ENCODE measurements at regions of chr5 and their contacts with region 1.

Region 1: GRCh38 chr5:16934123-16934522 is 2.0 kb downstream of the MYO10 start:
- DNase-seq: peak; percentile 69 to 92
- H3K4me3 ChIP-seq: peak overlapping the region; percentile 93
- H3K27ac ChIP-seq: 0 out of 2 replicates have a peak overlapping the region, but pooled peaks have one; percentile 7
- H3K4me1 ChIP-seq: peaks cover 37% of the 10 kb centered on the region
- H3K27me3 ChIP-seq: no peaks in the 10 kb centered on the region
- CTCF ChIP-seq: peak; percentile 99

Region 2: DNA sequence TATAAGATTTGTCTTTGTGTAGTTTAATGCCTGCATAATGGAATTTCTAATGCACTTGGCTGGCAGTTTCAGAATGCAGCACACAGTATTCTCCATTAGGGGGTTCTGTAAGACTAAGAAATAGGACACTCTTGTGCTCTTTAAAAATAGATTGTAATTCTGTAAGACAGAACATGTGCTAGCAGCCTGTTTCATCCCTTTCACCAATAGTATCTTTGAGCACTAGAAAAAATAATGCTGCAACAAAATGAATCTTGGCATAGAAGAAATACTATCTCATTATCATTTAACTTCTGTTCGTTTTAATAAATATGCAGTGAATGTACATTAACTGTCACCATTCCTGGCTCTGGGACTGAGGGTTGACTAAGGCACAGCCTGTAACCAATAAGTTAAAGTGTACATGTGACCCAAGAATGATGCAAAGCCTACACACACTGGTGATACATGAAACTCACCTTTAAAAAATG is 444.8 kb before region 1 on chr5:
- CTCF ChIA-PET with region 1: no interaction called
- POLR2A ChIA-PET with region 1: no interaction called
- intact Hi-C with region 1: loop called (anchors 2 kb)
- DNase-seq: peak; percentile 41 to 64
- H3K4me3 ChIP-seq: no peak overlapping the region
- H3K27ac ChIP-seq: no peak overlapping the region
- H3K4me1 ChIP-seq: peaks cover 26% of the 10 kb centered on the region
- H3K27me3 ChIP-seq: no peaks in the 10 kb centered on the region
- CTCF ChIP-seq: peak; percentile 88

Region 3: DNA sequence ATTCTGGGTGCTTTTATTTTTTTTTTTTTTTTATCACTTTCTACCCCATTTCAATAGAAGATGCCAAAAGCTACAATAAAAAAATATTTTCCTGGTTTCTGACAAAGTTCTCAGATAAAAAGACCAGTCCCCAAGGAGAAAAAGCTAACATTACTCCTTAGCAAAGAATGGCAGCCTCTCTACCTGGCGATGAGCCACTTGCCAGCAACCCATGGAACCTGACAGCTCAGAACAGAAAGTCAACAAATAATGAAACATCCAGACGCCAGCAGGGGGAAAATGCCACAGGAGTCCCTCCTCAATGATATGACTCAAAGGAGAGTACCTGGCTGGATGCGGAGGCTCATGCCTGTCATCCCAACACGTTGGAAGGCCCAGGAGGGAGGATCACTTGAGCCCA is 121.2 kb before region 1 on chr5:
- CTCF ChIA-PET with region 1: interaction called, 7 read pairs
- POLR2A ChIA-PET with region 1: interaction called, 5 read pairs
- intact Hi-C with region 1: loop called (anchors 1 kb)
- DNase-seq: peak; percentile 79 to 82
- H3K4me3 ChIP-seq: no peak overlapping the region
- H3K27ac ChIP-seq: no peak overlapping the region
- H3K4me1 ChIP-seq: peaks cover 43% of the 10 kb centered on the region
- H3K27me3 ChIP-seq: no peaks in the 10 kb centered on the region
- CTCF ChIP-seq: no peak; the same call in 1 of the 2 replicates

Region 4: GRCh38 chr5:16889203-16889971 is 44.7 kb before region 1 on chr5:
- CTCF ChIA-PET with region 1: interaction called, 5 read pairs
- POLR2A ChIA-PET with region 1: interaction called, 9 read pairs
- intact Hi-C with region 1: loop called (anchors 1 kb)
- DNase-seq: peak; percentile 54 to 90
- H3K4me3 ChIP-seq: peak overlapping the region; percentile 35; the same call in 1 of the 2 replicates
- H3K27ac ChIP-seq: peak overlapping the region; percentile 72
- H3K4me1 ChIP-seq: peaks cover 66% of the 10 kb centered on the region
- H3K27me3 ChIP-seq: no peaks in the 10 kb centered on the region
- CTCF ChIP-seq: no peak

Region 5: DNA sequence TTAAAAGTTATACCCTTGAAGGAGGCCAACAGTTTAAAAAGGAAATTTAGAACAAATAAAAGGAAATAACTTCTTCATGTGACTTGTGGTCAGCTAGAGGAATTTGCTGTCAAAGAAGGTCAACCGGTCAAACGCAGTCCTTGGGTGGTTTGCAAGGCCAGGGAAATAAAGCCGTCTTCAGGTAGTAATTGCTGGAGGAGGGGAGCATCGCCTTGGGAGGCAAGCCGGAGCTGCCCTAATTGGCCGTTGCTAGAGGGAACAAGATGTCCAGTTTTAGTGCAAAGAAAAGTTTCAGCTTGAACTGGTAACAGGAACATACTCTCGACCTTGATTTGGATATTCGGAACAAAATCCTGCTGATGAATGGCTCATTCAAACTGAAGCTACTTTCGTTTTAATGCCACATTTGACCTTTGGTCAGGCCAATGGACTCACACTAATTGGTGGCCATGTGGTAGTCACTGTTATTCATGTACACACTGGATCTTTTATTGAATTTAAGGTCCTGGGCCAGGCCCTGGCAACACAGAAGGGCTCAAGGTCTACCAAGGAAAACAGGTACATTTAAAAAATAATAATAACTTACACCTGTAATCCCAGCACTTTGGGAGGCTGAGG is 49.0 kb after region 1 on chr5:
- CTCF ChIA-PET with region 1: no interaction called
- POLR2A ChIA-PET with region 1: interaction called, 6 read pairs
- intact Hi-C with region 1: loop called (anchors 2 kb)
- DNase-seq: peak in 1 of 2 experiments; percentile 66
- H3K4me3 ChIP-seq: no peak overlapping the region
- H3K27ac ChIP-seq: no peak overlapping the region
- H3K4me1 ChIP-seq: peaks cover 12% of the 10 kb centered on the region; the same call in 1 of the 2 replicates
- H3K27me3 ChIP-seq: no peaks in the 10 kb centered on the region
- CTCF ChIP-seq: no peak

Region 6: DNA sequence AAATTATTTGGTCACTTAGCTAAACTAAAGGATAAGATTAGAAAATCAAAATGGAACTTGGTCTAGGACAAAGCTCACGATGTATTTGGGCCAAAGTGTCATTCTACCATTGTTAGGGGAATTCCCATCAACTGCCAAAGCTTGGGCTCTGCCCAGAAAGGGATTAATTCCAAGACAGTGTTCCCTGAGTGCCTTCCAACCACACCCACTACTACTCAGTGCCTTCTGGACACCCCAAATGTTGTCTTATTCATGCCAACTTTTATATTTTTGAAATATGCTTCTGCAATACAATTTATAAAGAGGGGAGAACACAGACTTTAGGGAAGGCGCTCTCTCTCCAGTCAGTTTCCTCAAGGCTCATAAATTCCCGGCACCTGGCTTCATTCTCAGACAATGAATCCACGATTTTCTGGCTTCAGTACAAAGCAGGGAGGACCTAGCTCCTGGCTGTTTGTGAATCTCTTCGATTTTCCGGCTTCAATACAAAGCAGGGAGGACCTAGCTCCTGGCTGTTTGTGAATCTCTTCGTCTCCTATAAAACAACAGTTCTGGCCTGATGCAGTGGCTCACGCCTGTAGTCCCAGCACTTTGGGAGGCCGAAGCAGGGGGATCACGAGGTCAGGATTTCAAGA is 122.0 kb after region 1 on chr5:
- CTCF ChIA-PET with region 1: no interaction called
- POLR2A ChIA-PET with region 1: no interaction called
- intact Hi-C with region 1: loop called (anchors 1 kb)
- DNase-seq: peak; percentile 5 to 49
- H3K4me3 ChIP-seq: no peak overlapping the region
- H3K27ac ChIP-seq: no peak overlapping the region
- H3K4me1 ChIP-seq: peaks cover 34% of the 10 kb centered on the region
- H3K27me3 ChIP-seq: no peaks in the 10 kb centered on the region
- CTCF ChIP-seq: no peak

Region 7: DNA sequence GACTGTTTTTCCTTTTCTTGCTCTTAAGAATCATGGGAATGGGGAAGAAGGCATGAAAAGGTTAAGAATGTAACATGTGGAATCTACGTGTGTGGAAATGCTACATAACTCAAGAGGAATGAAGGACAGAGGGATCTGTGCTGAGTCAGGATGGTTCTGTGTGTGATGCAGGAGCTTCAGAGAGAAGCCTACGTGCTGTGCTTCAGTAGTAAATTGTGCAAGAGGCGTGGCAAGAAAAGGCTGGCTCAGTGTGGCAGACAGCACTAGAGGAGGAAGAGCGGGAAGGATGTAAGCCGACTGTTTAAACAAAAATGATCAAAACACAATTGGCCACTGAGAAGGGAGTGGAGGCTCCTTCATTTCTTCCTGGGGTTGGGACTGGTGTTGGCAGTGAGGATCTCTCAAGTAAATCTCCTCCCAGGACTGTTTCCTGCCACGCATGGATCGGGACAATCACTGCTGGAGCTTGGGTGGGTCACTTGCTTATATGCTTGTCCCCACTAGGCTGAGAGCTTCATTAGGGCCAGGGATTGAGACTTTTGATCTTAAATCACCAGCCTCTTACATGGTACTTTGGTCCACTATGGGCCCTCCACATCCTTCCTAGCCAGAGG is 223.9 kb after region 1 on chr5:
- CTCF ChIA-PET with region 1: interaction called, 15 read pairs
- POLR2A ChIA-PET with region 1: interaction called, 4 read pairs
- intact Hi-C with region 1: no loop called
- DNase-seq: no peak
- H3K4me3 ChIP-seq: no peak overlapping the region
- H3K27ac ChIP-seq: no peak overlapping the region
- H3K4me1 ChIP-seq: peaks cover 9% of the 10 kb centered on the region
- H3K27me3 ChIP-seq: no peaks in the 10 kb centered on the region
- CTCF ChIP-seq: no peak

Measured in PC-9 (cell line).